ENCODE measurements at regions of chr10 and their contacts with region 1.

Region 1: GRCh38 chr10:124886195-124886594 is 55.7 kb upstream of the ZRANB1 start:
- DNase-seq: no peak
- H3K4me3 Mint-ChIP-seq: no peak overlapping the region
- H3K27ac Mint-ChIP-seq: no peak overlapping the region
- H3K4me1 Mint-ChIP-seq: no peaks in the 10 kb centered on the region
- H3K27me3 Mint-ChIP-seq: no peaks in the 10 kb centered on the region

Region 2: DNA sequence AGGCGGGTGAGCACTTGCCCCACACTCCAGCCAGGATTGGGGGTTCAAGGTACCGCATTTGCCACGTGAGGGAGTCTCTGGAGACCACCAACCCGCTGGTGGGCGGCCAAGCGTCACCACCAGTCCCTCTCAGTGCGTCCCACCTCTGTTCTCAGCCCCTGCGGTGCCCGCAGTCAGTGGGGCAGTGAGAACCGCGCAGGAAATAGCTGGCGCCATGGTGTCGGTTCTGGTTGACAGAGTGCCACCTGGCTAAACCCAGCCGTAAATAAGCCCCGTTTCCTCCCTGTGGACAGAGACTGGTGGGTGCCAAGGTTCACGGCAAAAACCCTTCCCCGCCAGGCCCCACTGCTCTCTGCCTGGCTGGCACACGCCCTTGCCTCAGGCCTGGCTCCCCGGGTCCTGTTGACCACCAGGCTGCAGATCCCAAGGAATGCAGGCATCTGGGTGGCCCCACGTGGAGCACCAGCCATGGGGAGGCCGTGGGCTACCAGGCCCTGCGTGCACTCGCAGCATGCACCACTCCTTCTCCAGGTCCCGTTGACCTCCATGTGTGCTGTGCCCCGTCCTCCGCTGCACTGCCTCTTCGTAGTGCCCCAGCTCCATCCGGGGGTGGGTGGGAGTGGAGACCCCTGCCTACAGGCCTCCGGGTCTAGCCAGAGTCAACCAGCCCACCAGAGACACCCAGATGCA is 284.6 kb before region 1 on chr10:
- intact Hi-C with region 1: no loop called
- DNase-seq: no peak
- H3K4me3 Mint-ChIP-seq: no peak overlapping the region
- H3K27ac Mint-ChIP-seq: no peak overlapping the region
- H3K4me1 Mint-ChIP-seq: no peaks in the 10 kb centered on the region
- H3K27me3 Mint-ChIP-seq: no peaks in the 10 kb centered on the region

Region 3: GRCh38 chr10:124791378-124792348 is 94.5 kb before region 1 on chr10 and contains the start of gene EEF1AKMT2:
- intact Hi-C with region 1: no loop called
- DNase-seq: peak; percentile 77
- H3K4me3 Mint-ChIP-seq: peak within 1 kb of the TSS; percentile 97
- H3K27ac Mint-ChIP-seq: peak within 1 kb of the TSS; percentile 95
- H3K4me1 Mint-ChIP-seq: peaks cover 15% of the 10 kb centered on the region
- H3K27me3 Mint-ChIP-seq: peaks cover 7% of the 10 kb centered on the region
- total RNA-seq, gene EEF1AKMT2: 20.9 and 21.0 TPM in 2 replicates

Region 4: GRCh38 chr10:124864421-124865193 is 21.6 kb before region 1 on chr10:
- intact Hi-C with region 1: loop called (anchors 1 kb)
- DNase-seq: no peak
- H3K4me3 Mint-ChIP-seq: no peak overlapping the region
- H3K27ac Mint-ChIP-seq: no peak overlapping the region
- H3K4me1 Mint-ChIP-seq: no peaks in the 10 kb centered on the region
- H3K27me3 Mint-ChIP-seq: peaks cover 2% of the 10 kb centered on the region

Region 5: GRCh38 chr10:125274961-125275360 is 388.8 kb after region 1 on chr10:
- intact Hi-C with region 1: no loop called
- DNase-seq: no peak
- H3K4me3 Mint-ChIP-seq: no peak overlapping the region
- H3K27ac Mint-ChIP-seq: no peak overlapping the region
- H3K4me1 Mint-ChIP-seq: no peaks in the 10 kb centered on the region
- H3K27me3 Mint-ChIP-seq: no peaks in the 10 kb centered on the region

Region 6: DNA sequence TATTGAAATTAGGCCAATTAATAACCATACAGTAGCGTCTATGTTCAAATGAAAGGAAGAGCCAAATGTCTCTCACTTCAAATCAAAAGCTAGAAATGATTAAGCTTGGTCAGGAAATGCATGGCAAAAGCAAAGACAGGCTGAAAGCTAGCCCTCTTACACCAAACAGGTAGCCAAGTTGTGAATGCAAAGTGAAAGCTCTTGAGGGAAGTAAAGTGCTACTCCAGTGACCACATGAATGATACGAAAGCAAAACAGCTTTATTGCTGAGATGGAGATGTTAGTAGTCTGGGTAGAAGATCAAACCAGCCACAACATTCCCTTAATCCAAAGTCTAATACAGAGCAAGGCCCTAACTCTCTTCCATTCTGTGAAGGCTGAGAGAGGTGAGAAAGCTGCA is 673.0 kb after region 1 on chr10:
- intact Hi-C with region 1: no loop called
- DNase-seq: no peak
- H3K4me3 Mint-ChIP-seq: no peak overlapping the region
- H3K27ac Mint-ChIP-seq: no peak overlapping the region
- H3K4me1 Mint-ChIP-seq: peaks cover 3% of the 10 kb centered on the region
- H3K27me3 Mint-ChIP-seq: peaks cover 2% of the 10 kb centered on the region

Measured in activated T-helper 2 cell treated with anti-CD3 and anti-CD28 coated beads, Interferon-gamma antibody, Interleukin-2, Interleukin-4, amounts not matched to agents 10 μg/mL and 5 μg/mL and 100 μg/mL, durations not matched to agents 14 hours and 24 hours and 36 hours (primary cell).